PC-3 (cell line): ENCODE measurements at regions of chr6 and their contacts with region 1.

Region 1: GRCh38 chr6:32971581-32972352 is 3.4 kb downstream of the BRD2 start:
- DNase-seq: peak; percentile 100
- ATAC-seq: peak; percentile 40
- H3K4me3 ChIP-seq: peak overlapping the region; percentile 98
- H3K27ac ChIP-seq: peak overlapping the region; percentile 99
- H3K4me1 ChIP-seq: peaks cover 51% of the 10 kb centered on the region
- H3K27me3 ChIP-seq: no peaks in the 10 kb centered on the region
- CTCF ChIP-seq: no peak

Region 2: GRCh38 chr6:32195652-32195901 is 776.2 kb before region 1 on chr6:
- CTCF ChIA-PET with region 1: no interaction called
- POLR2A ChIA-PET with region 1: interaction called, 3 read pairs
- intact Hi-C with region 1: loop called (anchors 5 kb)
- DNase-seq: peak; percentile 99
- ATAC-seq: 0 out of 2 replicates have a peak, but pooled peaks have one; percentile 87
- H3K4me3 ChIP-seq: peak overlapping the region; percentile 77; the same call in 1 of the 2 replicates
- H3K27ac ChIP-seq: peak overlapping the region; percentile 95; the same call in 1 of the 2 replicates
- H3K4me1 ChIP-seq: peaks cover 28% of the 10 kb centered on the region
- H3K27me3 ChIP-seq: no peaks in the 10 kb centered on the region
- CTCF ChIP-seq: no peak

Region 3: DNA sequence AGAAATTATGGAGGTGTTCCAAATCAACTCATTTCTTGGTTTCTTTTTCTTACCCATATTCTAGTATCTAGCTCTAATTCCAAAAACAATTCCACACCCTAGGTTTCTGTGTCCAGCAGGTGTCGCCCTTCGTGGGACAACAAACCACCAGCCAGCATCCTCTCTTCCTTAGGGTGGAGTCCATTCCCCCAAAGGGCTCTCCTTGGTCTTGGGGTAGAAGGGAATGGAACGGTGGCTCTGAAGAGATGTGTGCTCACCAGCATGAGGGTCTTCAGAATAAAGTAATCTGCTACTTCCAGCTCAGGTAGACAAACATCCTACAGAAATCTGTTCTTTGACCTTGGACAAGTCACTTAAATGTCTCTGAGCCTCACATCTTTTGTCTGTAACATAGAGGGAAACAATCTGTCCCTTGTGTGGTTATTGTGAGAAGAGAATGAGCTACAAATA is 38.1 kb before region 1 on chr6:
- CTCF ChIA-PET with region 1: interaction called, 11 read pairs
- POLR2A ChIA-PET with region 1: interaction called, 5 read pairs
- intact Hi-C with region 1: no loop called
- DNase-seq: peak; percentile 80
- ATAC-seq: peak; percentile 71
- H3K4me3 ChIP-seq: no peak overlapping the region
- H3K27ac ChIP-seq: no peak overlapping the region
- H3K4me1 ChIP-seq: no peaks in the 10 kb centered on the region
- H3K27me3 ChIP-seq: peaks cover 44% of the 10 kb centered on the region
- CTCF ChIP-seq: peak; percentile 92

Region 4: DNA sequence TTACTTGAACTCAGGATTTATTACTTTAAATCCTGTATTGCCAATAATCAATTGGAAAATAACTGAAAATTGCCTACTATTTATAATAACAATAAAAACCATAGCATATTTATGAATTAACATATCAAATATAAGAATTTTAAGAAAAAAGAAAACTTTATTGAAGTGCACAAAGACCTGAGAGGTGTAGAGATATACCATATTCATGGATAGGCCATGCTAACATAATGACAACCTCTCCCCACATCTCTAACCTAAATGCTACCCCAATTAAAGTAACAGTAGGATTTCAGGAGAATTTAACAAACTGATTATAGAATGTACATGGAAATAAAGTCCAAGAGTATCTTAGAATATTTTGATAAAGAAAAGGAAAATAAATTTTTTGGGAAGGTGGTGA is 25.8 kb before region 1 on chr6:
- CTCF ChIA-PET with region 1: no interaction called
- POLR2A ChIA-PET with region 1: no interaction called
- intact Hi-C with region 1: no loop called
- DNase-seq: no peak
- ATAC-seq: no peak
- H3K4me3 ChIP-seq: no peak overlapping the region
- H3K27ac ChIP-seq: no peak overlapping the region
- H3K4me1 ChIP-seq: no peaks in the 10 kb centered on the region
- H3K27me3 ChIP-seq: no peaks in the 10 kb centered on the region
- CTCF ChIP-seq: no peak

Region 5: DNA sequence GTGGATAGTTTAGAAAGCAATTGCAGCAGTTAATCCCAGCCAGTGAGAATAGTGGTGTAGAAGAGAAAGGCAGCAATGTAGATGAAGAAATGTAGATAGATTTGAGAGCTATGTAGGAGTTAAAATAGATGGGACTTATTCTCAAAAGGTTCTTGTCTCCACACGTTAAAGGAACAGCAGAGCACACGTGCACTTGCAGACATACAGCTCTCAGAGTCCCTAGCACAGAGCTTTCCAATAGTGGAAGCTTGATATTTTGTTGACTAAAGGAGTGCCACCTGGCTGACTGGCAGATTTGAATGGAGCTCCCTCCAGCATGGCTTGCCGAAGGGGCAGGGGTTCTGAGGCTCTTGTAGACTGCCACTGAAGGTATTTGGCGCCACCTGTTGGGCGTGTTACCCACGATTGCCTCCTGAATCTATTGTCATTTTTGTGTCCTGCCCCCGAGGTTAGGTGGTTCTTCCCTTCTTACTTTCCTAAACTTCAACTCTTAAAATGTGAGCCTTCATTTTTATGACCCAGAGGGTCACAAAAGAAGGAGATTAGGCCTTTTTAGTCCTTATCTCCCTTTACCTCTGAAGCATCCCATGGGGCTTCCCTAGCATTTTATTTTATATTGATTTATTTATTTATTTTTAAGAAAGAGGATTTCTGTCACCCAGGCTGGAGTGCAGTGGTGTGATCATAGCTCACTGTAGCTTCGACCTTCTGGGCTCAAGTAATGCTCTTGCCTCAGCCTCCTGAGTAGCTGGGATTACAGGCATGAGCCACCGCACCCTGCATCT is 13.0 kb after region 1 on chr6:
- CTCF ChIA-PET with region 1: interaction called, 40 read pairs
- POLR2A ChIA-PET with region 1: interaction called, 59 read pairs
- intact Hi-C with region 1: loop called (anchors 1 kb)
- DNase-seq: peak; percentile 95
- ATAC-seq: peak; percentile 95
- H3K4me3 ChIP-seq: no peak overlapping the region
- H3K27ac ChIP-seq: no peak overlapping the region
- H3K4me1 ChIP-seq: peaks cover 8% of the 10 kb centered on the region; the same call in 1 of the 2 replicates
- H3K27me3 ChIP-seq: no peaks in the 10 kb centered on the region
- CTCF ChIP-seq: peak; percentile 94